ENCODE measurements at regions of chr12 and their contacts with region 1.

Region 1: DNA sequence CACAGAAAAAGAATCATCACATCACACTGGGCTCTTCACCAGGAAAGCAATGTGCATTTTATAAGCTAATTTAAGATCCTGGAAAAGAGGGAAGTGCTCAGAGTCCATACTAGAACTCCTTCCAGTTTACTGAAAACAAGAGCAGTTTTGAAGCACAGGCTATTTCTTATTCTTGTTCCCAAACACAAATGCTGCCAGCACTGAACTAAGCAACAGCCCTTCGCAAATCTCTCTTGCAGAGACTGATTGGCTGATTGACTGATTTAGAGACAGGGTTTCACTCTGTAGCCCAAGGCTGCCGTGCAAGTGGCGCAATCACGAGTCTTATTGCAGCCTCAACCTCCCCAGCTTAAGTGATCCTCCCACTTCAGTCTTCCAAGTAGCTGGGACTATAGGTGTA is 44.8 kb downstream of the BCL2L14 start:
- DNase-seq: no peak
- ATAC-seq: no peak
- H3K4me3 ChIP-seq: no peak overlapping the region
- H3K27ac ChIP-seq: no peak overlapping the region
- H3K4me1 ChIP-seq: no peaks in the 10 kb centered on the region
- H3K27me3 ChIP-seq: no peaks in the 10 kb centered on the region
- CTCF ChIP-seq: no peak
- EP300 ChIP-seq: no peak
- POLR2A ChIP-seq: no peak
- RAD21 ChIP-seq: no peak

Region 2: GRCh38 chr12:12126551-12126950 is 11.0 kb after region 1 on chr12:
- CTCF ChIA-PET with region 1: interaction called, 3 read pairs
- POLR2A ChIA-PET with region 1: interaction called, 3 read pairs
- RAD21 ChIA-PET with region 1: no interaction called
- SMC1A ChIA-PET with region 1: interaction called, 10 read pairs
- in situ Hi-C with region 1: no loop called
- intact Hi-C with region 1: no loop called
- DNase-seq: no peak
- ATAC-seq: no peak
- H3K4me3 ChIP-seq: no peak overlapping the region
- H3K27ac ChIP-seq: no peak overlapping the region
- H3K4me1 ChIP-seq: no peaks in the 10 kb centered on the region
- H3K27me3 ChIP-seq: no peaks in the 10 kb centered on the region
- CTCF ChIP-seq: no peak
- EP300 ChIP-seq: no peak
- POLR2A ChIP-seq: no peak
- RAD21 ChIP-seq: no peak

Measured in GM12878 (cell line).